Activated T-helper 2 cell treated with anti-CD3 and anti-CD28 coated beads, Interferon-gamma antibody, Interleukin-2, Interleukin-4, amounts not matched to agents 10 μg/mL and 5 μg/mL and 100 μg/mL, durations not matched to agents 14 hours and 24 hours and 36 hours (primary cell): ENCODE measurements at regions of chr4 and their contacts with region 1.

Region 1: DNA sequence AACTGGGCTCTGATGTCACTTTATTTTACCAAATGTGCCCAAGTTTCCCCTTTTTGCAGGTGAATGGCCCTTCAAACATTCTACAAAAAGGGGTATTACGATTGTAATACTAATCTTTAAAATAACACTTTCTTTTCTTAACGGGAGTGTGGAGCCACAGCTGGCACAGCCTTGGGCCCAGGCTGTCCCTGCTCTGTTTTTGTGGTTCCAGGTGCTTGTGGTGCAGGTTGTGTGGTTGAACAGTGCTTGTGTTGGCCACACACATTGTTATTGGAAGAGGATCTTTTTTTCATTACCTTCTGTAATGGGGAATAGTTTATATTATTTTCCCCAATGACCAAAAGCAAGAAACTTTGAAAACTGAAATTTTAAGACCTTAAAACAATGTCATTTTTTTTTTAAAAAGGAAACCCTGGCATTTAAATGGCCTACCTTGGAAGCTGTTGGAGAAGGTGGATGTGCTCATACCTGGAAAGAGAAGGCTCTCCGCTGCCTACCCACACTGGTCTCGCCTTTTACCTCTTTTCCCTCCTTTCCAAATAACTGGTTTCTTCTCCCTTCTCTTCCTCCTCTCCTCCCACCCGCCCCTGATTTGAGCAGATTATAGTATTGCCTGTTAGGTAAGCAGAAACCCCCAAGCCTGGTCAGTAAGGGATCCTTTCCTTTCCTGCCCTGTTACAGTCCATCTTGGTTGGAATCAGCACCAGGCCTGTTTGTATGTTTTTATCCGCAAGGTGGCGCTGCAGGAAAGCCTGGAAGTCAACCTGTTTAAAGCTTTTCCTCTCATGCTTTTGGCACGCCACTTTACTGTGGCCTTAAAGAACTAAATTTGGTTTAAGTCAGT is 28.6 kb downstream of the HADH start:
- DNase-seq: peak; percentile 70
- H3K4me3 Mint-ChIP-seq: no peak overlapping the region
- H3K27ac Mint-ChIP-seq: peak overlapping the region; percentile 50
- H3K4me1 Mint-ChIP-seq: peaks cover 7% of the 10 kb centered on the region
- H3K27me3 Mint-ChIP-seq: no peaks in the 10 kb centered on the region

Region 2: DNA sequence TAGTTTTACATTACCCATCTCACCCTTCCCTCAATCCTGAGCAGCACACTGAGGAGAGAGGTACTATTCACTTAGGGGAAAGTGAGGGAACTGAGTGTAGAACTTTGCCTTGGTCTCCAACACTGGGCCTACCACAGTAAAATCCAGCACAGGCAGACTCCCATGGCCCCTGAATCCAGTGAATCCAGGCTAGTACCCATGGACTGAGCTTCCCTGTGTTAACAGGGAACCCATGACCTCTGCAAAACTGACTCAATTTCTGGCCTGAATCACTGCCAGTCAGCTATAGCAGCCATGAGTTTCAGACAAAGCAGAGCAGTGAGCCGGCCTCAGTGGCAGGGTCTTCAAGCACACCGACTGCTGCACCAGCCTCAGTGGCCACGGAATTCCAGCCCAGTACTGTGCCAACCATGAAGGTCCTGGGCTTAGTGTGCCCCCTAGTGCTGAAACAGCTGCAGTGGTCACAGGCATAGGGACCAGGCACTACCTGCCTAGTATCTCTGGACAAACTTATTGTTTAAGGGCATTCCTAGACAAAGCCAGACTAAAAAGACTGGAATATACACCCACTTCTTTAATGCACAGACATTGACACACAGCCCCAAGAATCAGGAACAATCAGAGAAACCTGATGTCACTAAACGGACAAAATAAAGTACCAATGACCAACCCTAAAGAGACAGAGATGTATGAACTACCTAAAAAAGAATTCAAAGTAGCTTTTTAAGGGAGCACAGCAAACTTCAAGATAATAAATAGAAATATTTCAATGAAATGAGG is 474.7 kb after region 1 on chr4:
- intact Hi-C with region 1: loop called (anchors 2 kb)
- DNase-seq: no peak
- H3K4me3 Mint-ChIP-seq: no peak overlapping the region
- H3K27ac Mint-ChIP-seq: no peak overlapping the region
- H3K4me1 Mint-ChIP-seq: no peaks in the 10 kb centered on the region
- H3K27me3 Mint-ChIP-seq: peaks cover 12% of the 10 kb centered on the region

Region 3: GRCh38 chr4:108570993-108571569 is 552.8 kb after region 1 on chr4:
- intact Hi-C with region 1: loop called (anchors 1 kb)
- DNase-seq: no peak
- H3K4me3 Mint-ChIP-seq: no peak overlapping the region
- H3K27ac Mint-ChIP-seq: no peak overlapping the region
- H3K4me1 Mint-ChIP-seq: peaks cover 5% of the 10 kb centered on the region
- H3K27me3 Mint-ChIP-seq: no peaks in the 10 kb centered on the region